ENCODE measurements at regions of chr11 and their contacts with region 1.

Region 1: GRCh38 chr11:64846998-64847666 is 2.7 kb upstream of the CDC42BPG start:
- DNase-seq: no peak
- ATAC-seq: peak; percentile 61
- H3K4me3 ChIP-seq: no peak overlapping the region
- H3K27ac ChIP-seq: no peak overlapping the region
- H3K4me1 ChIP-seq: peaks cover 55% of the 10 kb centered on the region
- H3K27me3 ChIP-seq: no peaks in the 10 kb centered on the region
- CTCF ChIP-seq: peak; percentile 86 to 97 (median 96)
- EP300 ChIP-seq: no peak
- POLR2A ChIP-seq: peak; percentile 36; the same call in 1 of the 2 replicates
- RAD21 ChIP-seq: peak; percentile 90

Region 2: DNA sequence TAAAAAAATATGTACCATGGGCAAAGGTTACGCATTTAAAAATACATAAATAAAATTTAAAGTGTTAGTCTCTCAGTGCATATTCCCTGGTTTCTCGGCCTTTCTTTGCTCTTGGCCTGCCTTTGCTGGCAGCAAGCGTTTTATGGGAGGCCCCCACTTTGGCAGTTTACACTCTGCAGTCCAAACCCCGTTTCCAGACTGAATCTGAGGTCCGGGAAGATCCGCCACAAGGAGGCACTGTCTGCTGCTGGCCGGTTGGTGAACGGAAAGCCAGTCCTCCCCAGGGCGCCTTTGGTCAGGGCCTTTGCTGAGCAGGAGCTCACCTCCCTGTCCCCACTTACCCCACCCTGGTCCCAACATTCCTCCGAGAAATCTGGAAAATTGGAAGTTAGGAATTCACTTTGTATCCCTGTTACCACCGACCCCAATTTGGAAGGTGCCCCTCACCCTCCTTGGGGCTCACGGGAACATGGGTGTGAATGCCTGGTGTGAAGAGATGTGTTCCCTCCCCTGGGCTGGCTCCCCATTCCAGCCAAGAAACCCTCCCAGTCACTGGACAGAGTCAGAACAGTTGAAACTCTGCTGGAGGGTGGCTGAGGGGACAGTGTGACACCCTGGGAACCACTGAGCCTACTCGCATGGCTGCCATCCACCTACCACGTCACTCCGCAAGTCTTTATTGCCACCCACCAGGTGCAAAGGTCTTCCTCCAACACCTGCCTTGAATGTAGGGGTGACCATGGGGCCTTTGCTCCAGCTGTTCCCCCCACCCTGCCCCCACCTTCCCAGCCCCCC is 59.4 kb before region 1 on chr11:
- CTCF ChIA-PET with region 1: interaction called, 21 read pairs
- POLR2A ChIA-PET with region 1: interaction called, 3 read pairs
- RAD21 ChIA-PET with region 1: interaction called, 6 read pairs
- SMC1A ChIA-PET with region 1: interaction called, 5 read pairs
- in situ Hi-C with region 1: no loop called
- intact Hi-C with region 1: no loop called
- DNase-seq: no peak
- ATAC-seq: peak; percentile 94
- H3K4me3 ChIP-seq: no peak overlapping the region
- H3K27ac ChIP-seq: no peak overlapping the region
- H3K4me1 ChIP-seq: peaks cover 5% of the 10 kb centered on the region
- H3K27me3 ChIP-seq: no peaks in the 10 kb centered on the region
- CTCF ChIP-seq: peak; percentile 68 to 87 (median 70)
- EP300 ChIP-seq: no peak
- POLR2A ChIP-seq: no peak
- RAD21 ChIP-seq: peak; percentile 70

Region 3: DNA sequence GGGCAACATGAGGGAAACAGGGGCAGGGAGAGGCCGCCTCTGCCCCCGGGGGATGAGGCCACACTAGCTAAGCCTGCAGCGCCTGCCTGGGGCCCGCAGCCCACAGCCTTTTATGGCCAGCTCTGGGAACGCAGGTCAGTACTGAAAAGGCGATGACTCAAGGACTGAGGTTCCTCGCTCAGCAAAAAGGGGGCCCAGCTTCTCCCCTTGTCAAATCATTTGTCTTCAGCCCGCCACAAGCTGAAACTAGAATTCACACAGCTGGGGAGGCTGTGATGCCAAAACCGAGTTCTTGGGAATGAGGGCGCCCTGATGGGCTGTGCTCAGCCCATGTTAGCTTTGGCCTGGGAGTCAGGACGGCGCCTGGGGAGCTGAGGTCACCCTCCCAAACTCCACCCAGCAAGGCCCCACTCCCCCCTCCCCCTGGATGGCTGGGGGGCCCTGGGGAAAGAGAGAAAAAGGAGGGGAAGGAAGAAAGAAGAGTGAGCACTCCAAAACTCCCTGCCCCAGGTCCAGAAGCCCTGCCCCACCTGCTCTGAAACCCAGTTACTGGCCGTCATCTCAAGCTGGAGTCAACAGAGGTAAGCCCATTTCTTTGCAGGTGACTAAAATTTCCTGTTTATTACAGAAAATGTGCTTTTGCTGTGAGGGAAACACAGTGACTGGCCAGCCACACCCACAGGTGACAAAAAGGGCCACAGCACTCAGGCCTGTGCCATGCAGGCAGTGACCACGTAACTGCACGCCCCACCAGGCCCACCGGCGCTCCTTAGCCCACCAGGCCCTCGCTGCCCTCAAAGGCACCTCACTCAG is 17.5 kb after region 1 on chr11:
- CTCF ChIA-PET with region 1: interaction called, 374 read pairs
- POLR2A ChIA-PET with region 1: interaction called, 232 read pairs
- RAD21 ChIA-PET with region 1: interaction called, 316 read pairs
- SMC1A ChIA-PET with region 1: interaction called, 306 read pairs
- in situ Hi-C with region 1: no loop called
- intact Hi-C with region 1: loop called (anchors 1 kb)
- DNase-seq: no peak
- ATAC-seq: peak; percentile 59
- H3K4me3 ChIP-seq: peak overlapping the region; percentile 44
- H3K27ac ChIP-seq: peak overlapping the region; percentile 99
- H3K4me1 ChIP-seq: peaks cover 91% of the 10 kb centered on the region
- H3K27me3 ChIP-seq: no peaks in the 10 kb centered on the region
- CTCF ChIP-seq: no peak
- EP300 ChIP-seq: peak in 1 of 2 experiments; percentile 26; a peak in 2 of 4 replicates
- POLR2A ChIP-seq: peak; percentile 78
- RAD21 ChIP-seq: no peak

Region 4: DNA sequence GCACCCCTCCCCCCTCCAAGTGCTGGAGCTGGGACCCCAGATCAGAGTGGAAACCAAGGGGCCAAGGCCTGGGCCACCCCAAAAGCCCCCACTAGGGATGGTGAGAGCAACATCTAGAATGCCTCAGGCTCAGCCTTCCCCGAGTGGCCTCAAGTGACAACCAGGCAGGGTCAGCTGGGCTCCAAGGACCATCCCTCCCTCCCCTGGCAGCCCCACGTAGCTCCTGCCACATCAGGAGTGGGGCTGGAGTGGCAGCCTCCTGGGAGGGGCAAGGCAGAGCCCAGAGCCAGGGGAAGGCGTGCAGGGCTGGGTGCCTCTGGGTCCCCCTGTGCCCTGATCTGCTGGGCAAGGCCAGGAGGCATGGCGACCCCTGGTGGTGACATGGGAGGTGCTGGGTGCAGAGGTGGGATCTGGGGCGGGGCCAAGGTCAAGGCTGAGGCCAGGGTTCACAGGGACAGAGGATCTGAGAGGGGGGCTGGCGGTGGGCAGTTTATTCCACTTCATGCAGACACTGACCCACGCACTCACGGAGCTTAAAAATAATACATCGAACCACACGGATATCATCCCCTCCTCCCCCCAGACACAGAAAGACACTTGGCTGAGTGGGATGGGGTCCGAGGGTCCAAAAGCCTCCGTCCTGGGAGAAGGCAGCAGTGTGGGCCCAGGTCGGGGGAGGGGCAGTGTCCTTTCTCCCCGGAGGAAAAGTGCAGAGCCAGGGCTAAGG is 47.1 kb after region 1 on chr11:
- CTCF ChIA-PET with region 1: interaction called, 1,208 read pairs
- POLR2A ChIA-PET with region 1: interaction called, 620 read pairs
- RAD21 ChIA-PET with region 1: interaction called, 101 read pairs
- SMC1A ChIA-PET with region 1: interaction called, 138 read pairs
- in situ Hi-C with region 1: loop called (anchors 5 kb)
- intact Hi-C with region 1: loop called (anchors 1 kb)
- DNase-seq: no peak
- ATAC-seq: peak; percentile 97
- H3K4me3 ChIP-seq: no peak overlapping the region
- H3K27ac ChIP-seq: no peak overlapping the region
- H3K4me1 ChIP-seq: no peaks in the 10 kb centered on the region; the same call in 1 of the 2 replicates
- H3K27me3 ChIP-seq: no peaks in the 10 kb centered on the region
- CTCF ChIP-seq: peak; percentile 93 to 99 (median 94)
- EP300 ChIP-seq: no peak
- POLR2A ChIP-seq: no peak; the same call in 1 of the 2 replicates
- RAD21 ChIP-seq: peak; percentile 94

Region 5: GRCh38 chr11:64996710-64997380 is 149.7 kb after region 1 on chr11 and contains the start of gene BATF2:
- CTCF ChIA-PET with region 1: interaction called, 20 read pairs
- POLR2A ChIA-PET with region 1: no interaction called
- RAD21 ChIA-PET with region 1: interaction called, 19 read pairs
- SMC1A ChIA-PET with region 1: interaction called, 15 read pairs
- in situ Hi-C with region 1: no loop called
- intact Hi-C with region 1: no loop called
- DNase-seq: no peak
- ATAC-seq: peak; percentile 87
- H3K4me3 ChIP-seq: peak within 1 kb of the TSS; percentile 28; the same call in 1 of the 2 replicates
- H3K27ac ChIP-seq: no peak within 1 kb of the TSS
- H3K4me1 ChIP-seq: peaks cover 8% of the 10 kb centered on the region
- H3K27me3 ChIP-seq: no peaks in the 10 kb centered on the region; a peak in 1 of 4 replicates
- CTCF ChIP-seq: peak; percentile 35 to 48 (median 41); a peak in 5 of 6 replicates
- EP300 ChIP-seq: no peak
- POLR2A ChIP-seq: no peak
- RAD21 ChIP-seq: peak; percentile 52
- polyA plus RNA-seq, gene BATF2: 0.18 to 0.24 TPM

Region 6: DNA sequence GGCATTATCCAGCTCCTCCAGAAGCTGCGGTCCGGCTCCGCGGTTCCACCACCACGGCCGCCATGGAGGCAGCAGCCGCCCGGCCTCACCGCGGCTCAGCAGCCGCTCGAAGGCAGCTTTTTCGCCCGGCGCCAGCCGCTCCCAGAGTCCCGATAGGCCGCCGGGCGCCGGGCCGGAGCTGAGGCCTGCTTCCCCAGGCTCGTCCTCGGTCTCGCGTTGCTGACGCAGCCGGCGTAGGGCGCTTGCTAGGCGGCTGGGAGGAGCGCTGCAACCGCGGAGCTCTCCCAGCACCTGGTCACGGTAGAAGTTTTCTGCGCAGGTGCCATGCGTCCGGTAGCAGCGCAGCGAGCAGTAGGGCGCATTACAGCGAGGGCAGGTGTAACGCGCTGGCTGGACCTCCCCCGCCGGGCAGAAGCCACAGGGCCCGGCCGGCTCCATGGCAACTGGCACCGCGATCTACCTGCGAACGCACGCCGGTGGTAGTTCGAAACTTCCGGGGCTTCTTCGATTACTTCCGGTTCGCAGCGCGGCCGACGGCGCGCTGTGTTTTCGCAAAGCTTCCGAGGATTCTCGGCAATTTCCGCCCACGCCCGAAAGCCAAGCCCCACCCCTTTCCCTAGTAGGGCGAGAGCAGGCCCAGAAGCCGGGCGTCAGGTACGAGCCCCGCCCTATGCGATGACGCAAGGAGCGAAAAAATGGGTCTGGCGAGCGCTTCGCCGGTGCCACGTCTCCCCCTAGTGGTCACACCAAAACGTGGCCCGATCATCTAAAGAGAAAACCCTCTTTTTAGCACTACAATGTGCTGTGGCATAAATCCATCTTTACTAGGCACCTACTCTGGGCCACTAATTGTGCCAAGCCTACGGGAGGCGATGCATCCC is 270.3 kb after region 1 on chr11 and contains the start of gene ZNHIT2:
- CTCF ChIA-PET with region 1: interaction called, 60 read pairs
- POLR2A ChIA-PET with region 1: interaction called, 12 read pairs
- RAD21 ChIA-PET with region 1: interaction called, 13 read pairs
- SMC1A ChIA-PET with region 1: interaction called, 11 read pairs
- in situ Hi-C with region 1: no loop called
- intact Hi-C with region 1: loop called (anchors 2 kb)
- DNase-seq: peak; percentile 97
- ATAC-seq: peak; percentile 75
- H3K4me3 ChIP-seq: peak within 1 kb of the TSS; percentile 76
- H3K27ac ChIP-seq: peak within 1 kb of the TSS; percentile 68
- H3K4me1 ChIP-seq: peaks cover 29% of the 10 kb centered on the region
- H3K27me3 ChIP-seq: no peaks in the 10 kb centered on the region
- CTCF ChIP-seq: peak; percentile 85 to 97 (median 93); a peak in 5 of 6 replicates
- EP300 ChIP-seq: no peak
- POLR2A ChIP-seq: peak; percentile 95
- RAD21 ChIP-seq: peak; percentile 78
- polyA plus RNA-seq, gene ZNHIT2: 0.40 TPM in 1 of 2 experiments, not detected in the other

Region 7: DNA sequence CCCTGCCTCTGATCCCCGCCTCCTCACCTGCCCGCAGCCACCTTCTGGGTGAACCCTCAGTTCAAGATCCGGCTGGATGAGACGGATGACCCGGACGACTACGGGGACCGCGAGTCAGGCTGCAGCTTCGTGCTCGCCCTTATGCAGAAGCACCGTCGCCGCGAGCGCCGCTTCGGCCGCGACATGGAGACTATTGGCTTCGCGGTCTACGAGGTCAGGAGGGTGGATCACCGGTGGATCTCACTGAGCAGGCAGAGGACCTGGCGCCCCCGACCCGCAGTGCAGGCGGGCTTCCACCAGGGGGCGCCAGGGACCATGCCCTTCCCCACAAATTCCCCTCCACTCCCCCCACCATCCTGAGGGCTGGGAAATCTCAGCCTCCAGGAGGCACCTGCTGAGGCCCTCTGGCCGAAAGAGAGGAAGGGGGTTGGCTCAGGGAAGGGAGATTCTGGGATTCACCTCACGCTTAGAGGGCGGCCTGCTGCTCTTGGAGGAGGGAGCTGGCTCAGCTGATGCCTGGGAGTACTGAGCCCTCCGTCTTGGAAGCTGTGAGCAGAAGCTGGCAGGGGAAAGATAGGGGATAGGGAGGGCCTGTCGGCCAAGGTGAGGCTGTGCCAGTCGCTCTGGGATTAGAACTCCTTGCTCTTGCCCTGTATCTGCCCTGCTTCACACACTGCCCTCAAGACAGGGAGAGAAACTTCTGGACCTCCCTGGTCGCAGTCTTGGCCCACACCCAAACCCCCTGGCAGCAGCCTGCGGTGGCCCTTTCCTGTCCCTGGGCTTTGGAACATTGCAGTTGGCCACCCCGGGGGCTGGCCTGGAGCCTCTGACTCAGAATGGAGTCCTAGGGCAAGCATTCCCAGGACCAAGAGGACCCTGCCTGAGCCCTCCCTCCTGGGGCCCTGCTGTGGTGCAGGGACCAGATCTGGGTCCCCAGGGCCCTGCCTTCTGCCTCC is 357.8 kb after region 1 on chr11:
- CTCF ChIA-PET with region 1: no interaction called
- POLR2A ChIA-PET with region 1: no interaction called
- RAD21 ChIA-PET with region 1: no interaction called
- SMC1A ChIA-PET with region 1: no interaction called
- in situ Hi-C with region 1: no loop called
- intact Hi-C with region 1: no loop called
- DNase-seq: no peak
- ATAC-seq: peak; percentile 90
- H3K4me3 ChIP-seq: no peak overlapping the region
- H3K27ac ChIP-seq: no peak overlapping the region
- H3K4me1 ChIP-seq: no peaks in the 10 kb centered on the region
- H3K27me3 ChIP-seq: no peaks in the 10 kb centered on the region
- CTCF ChIP-seq: peak; percentile 73 to 96 (median 81)
- EP300 ChIP-seq: no peak
- POLR2A ChIP-seq: no peak; the same call in 1 of the 2 replicates
- RAD21 ChIP-seq: peak; percentile 60

Region 8: DNA sequence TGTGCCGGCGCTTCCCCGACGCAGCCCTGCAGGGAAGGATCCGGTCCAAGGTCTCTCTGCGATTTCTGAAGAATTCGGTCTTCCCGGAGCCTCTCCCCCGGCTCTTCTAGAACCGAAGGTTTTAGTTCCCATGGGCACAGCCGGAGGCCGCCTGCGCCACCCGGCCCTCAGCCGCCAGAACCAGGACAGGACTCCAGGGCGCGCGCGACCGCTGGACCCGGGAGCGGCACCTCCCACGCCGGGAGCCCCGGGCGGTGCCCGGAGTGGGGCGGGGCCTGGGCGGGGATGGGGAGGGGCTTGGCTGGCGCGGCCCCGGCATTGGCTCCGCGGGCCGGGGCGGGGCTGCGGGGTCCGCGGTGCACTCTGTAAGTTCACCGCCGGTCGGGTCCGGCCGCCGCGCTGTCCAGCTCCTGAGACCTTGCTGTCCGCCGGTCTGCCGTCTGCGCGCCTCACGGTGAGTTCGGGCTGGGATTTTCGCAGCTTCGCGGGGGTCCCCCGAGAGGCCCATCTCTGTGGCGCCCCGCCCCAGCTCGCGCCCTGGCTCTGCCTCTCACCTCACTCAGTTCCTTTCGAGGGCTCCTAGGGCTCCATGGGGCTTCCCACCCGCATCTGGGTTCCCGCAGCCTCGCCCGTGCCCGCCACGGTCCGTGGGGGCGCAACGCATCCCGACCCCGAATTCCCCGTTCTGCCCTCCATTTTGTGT is 467.5 kb after region 1 on chr11 and contains the start of gene CDC42EP2:
- CTCF ChIA-PET with region 1: interaction called, 26 read pairs
- POLR2A ChIA-PET with region 1: no interaction called
- RAD21 ChIA-PET with region 1: interaction called, 8 read pairs
- SMC1A ChIA-PET with region 1: interaction called, 9 read pairs
- in situ Hi-C with region 1: no loop called
- intact Hi-C with region 1: no loop called
- DNase-seq: no peak
- ATAC-seq: peak; percentile 97
- H3K4me3 ChIP-seq: peak within 1 kb of the TSS; percentile 95
- H3K27ac ChIP-seq: no peak within 1 kb of the TSS
- H3K4me1 ChIP-seq: no peaks in the 10 kb centered on the region
- H3K27me3 ChIP-seq: peaks cover 0 to 1% of the 10 kb centered on the region in 2 experiments; a peak in 2 of 4 replicates
- CTCF ChIP-seq: no peak
- EP300 ChIP-seq: no peak
- POLR2A ChIP-seq: no peak
- RAD21 ChIP-seq: no peak
- polyA plus RNA-seq, gene CDC42EP2: 0.07 TPM in 1 of 2 experiments, not detected in the other